PC-9 (cell line): ENCODE measurements at regions of chr12 and their contacts with region 1.

Region 1: GRCh38 chr12:45298716-45299692 is 83.1 kb downstream of the ANO6 start:
- DNase-seq: peak; percentile 52 to 93
- H3K4me3 ChIP-seq: peak overlapping the region; percentile 12; the same call in 1 of the 2 replicates
- H3K27ac ChIP-seq: peak overlapping the region; percentile 90
- H3K4me1 ChIP-seq: peaks cover 51% of the 10 kb centered on the region
- H3K27me3 ChIP-seq: no peaks in the 10 kb centered on the region
- CTCF ChIP-seq: no peak

Region 2: GRCh38 chr12:45284131-45284901 is 14.7 kb before region 1 on chr12:
- CTCF ChIA-PET with region 1: no interaction called
- POLR2A ChIA-PET with region 1: interaction called, 3 read pairs
- intact Hi-C with region 1: loop called (anchors 2 kb)
- DNase-seq: peak; percentile 48 to 95
- H3K4me3 ChIP-seq: peak overlapping the region; percentile 38; the same call in 1 of the 2 replicates
- H3K27ac ChIP-seq: peak overlapping the region; percentile 90
- H3K4me1 ChIP-seq: peaks cover 48% of the 10 kb centered on the region
- H3K27me3 ChIP-seq: no peaks in the 10 kb centered on the region
- CTCF ChIP-seq: 0 out of 2 replicates have a peak, but pooled peaks have one; percentile 18

Region 3: GRCh38 chr12:45354399-45354798 is 55.4 kb after region 1 on chr12:
- CTCF ChIA-PET with region 1: no interaction called
- POLR2A ChIA-PET with region 1: interaction called, 4 read pairs
- intact Hi-C with region 1: loop called (anchors 10 kb)
- DNase-seq: no peak
- H3K4me3 ChIP-seq: no peak overlapping the region
- H3K27ac ChIP-seq: no peak overlapping the region
- H3K4me1 ChIP-seq: peaks cover 8% of the 10 kb centered on the region
- H3K27me3 ChIP-seq: no peaks in the 10 kb centered on the region
- CTCF ChIP-seq: no peak